HCT116 (cell line): ENCODE measurements at regions of chr1 and their contacts with region 1.

Region 1: GRCh38 chr1:214584805-214585766 is 17.9 kb upstream of the CENPF start:
- DNase-seq: peak; percentile 40
- ATAC-seq: peak; percentile 76
- H3K4me3 ChIP-seq: no peak overlapping the region
- H3K27ac ChIP-seq: no peak overlapping the region
- H3K4me1 ChIP-seq: peaks cover 12 to 22% of the 10 kb centered on the region in 2 experiments
- H3K27me3 ChIP-seq: no peaks in the 10 kb centered on the region
- CTCF ChIP-seq: peak; percentile 57 to 95 (median 83)
- POLR2A ChIP-seq: no peak
- RAD21 ChIP-seq: peak; percentile 95

Region 2: DNA sequence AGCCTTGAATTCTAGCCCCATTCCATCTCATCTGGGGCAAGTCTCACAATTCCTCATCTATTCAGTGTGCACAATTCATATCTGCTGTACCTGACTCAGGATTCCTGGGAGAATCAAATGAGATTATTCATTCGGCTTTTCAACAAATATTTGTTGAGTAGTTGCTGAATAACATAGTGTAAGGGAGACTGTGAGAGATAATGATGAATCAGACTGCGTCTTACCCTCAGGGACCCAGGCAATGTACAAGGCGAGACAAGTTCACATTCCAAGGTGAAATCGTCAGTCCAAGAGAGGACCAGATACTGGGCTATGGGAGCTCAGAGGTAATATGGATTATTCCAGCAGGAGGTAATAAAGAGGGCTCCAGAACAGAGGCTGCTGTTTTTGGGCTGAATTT is 371.9 kb before region 1 on chr1:
- CTCF ChIA-PET with region 1: interaction called, 4 read pairs
- POLR2A ChIA-PET with region 1: interaction called, 3 read pairs
- RAD21 ChIA-PET with region 1: interaction called in 1 of 2 experiments, 3 read pairs
- intact Hi-C with region 1: loop called (anchors 2 kb)
- DNase-seq: no peak
- ATAC-seq: no peak
- H3K4me3 ChIP-seq: no peak overlapping the region
- H3K27ac ChIP-seq: no peak overlapping the region
- H3K4me1 ChIP-seq: peaks cover 0 to 4% of the 10 kb centered on the region in 2 experiments; a peak in 1 of 4 replicates
- H3K27me3 ChIP-seq: peaks cover 7% of the 10 kb centered on the region
- CTCF ChIP-seq: no peak
- POLR2A ChIP-seq: no peak
- RAD21 ChIP-seq: no peak

Region 3: GRCh38 chr1:214386747-214387146 is 198.3 kb before region 1 on chr1:
- CTCF ChIA-PET with region 1: interaction called, 18 read pairs
- POLR2A ChIA-PET with region 1: no interaction called
- RAD21 ChIA-PET with region 1: interaction called in 1 of 2 experiments, 6 read pairs
- intact Hi-C with region 1: loop called (anchors 1 kb)
- DNase-seq: no peak
- ATAC-seq: no peak
- H3K4me3 ChIP-seq: no peak overlapping the region
- H3K27ac ChIP-seq: no peak overlapping the region
- H3K4me1 ChIP-seq: no peaks in the 10 kb centered on the region; a peak in 1 of 4 replicates
- H3K27me3 ChIP-seq: no peaks in the 10 kb centered on the region
- CTCF ChIP-seq: no peak
- POLR2A ChIP-seq: no peak
- RAD21 ChIP-seq: no peak

Region 4: DNA sequence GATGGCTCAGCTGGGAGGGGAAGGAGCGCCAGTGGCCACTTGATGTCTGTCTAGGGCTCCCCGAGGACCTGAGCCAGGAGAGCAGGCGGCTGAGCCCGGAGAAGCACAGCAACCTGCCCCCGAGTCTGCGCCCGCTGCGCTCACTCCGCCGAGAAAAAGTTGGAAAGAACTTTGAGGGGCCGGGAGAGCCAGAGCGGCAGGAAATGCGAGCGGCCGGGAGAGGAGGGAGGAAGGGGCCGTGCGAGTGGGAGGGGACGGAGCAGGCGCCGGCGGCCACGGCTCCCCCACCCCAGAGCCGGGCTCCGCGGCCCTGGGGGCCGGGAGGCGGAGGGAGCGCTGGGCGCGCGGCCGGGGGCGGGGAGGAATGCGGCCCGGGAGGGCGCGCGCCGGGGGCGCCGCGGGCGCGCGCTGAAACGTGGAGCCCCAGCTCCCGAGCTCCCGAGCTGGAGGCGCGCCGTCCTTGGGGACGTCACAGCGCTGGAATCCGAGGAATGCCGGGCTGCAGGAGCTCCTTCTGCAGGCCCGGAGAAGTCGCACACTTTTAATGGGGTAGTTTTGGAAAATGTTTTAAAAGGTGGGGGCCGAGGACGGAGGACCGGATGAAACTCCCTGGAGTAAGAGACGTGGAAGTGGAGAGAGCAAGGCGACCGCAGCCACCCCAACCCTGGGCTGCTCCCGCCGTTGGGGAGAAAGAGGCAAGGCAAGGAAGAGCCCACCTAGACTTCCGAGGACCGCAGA is 33.5 kb before region 1 on chr1 and contains the start of gene PTPN14:
- CTCF ChIA-PET with region 1: interaction called, 5 read pairs
- POLR2A ChIA-PET with region 1: interaction called, 3 read pairs
- RAD21 ChIA-PET with region 1: no interaction called
- intact Hi-C with region 1: loop called (anchors 2 kb)
- DNase-seq: peak; percentile 85
- ATAC-seq: peak; percentile 83
- H3K4me3 ChIP-seq: peak within 1 kb of the TSS; percentile 80 to 93
- H3K27ac ChIP-seq: peak within 1 kb of the TSS; percentile 87
- H3K4me1 ChIP-seq: peaks cover 30 to 39% of the 10 kb centered on the region in 2 experiments
- H3K27me3 ChIP-seq: no peaks in the 10 kb centered on the region
- CTCF ChIP-seq: peak in 2 of 3 experiments; percentile 25 to 33; a peak in 3 of 6 replicates
- POLR2A ChIP-seq: no peak
- RAD21 ChIP-seq: 0 out of 2 replicates have a peak, but pooled peaks have one; percentile 19
- total RNA-seq, gene PTPN14: 37.5 TPM